ENCODE measurements at regions of chr18 and their contacts with region 1.

Region 1: DNA sequence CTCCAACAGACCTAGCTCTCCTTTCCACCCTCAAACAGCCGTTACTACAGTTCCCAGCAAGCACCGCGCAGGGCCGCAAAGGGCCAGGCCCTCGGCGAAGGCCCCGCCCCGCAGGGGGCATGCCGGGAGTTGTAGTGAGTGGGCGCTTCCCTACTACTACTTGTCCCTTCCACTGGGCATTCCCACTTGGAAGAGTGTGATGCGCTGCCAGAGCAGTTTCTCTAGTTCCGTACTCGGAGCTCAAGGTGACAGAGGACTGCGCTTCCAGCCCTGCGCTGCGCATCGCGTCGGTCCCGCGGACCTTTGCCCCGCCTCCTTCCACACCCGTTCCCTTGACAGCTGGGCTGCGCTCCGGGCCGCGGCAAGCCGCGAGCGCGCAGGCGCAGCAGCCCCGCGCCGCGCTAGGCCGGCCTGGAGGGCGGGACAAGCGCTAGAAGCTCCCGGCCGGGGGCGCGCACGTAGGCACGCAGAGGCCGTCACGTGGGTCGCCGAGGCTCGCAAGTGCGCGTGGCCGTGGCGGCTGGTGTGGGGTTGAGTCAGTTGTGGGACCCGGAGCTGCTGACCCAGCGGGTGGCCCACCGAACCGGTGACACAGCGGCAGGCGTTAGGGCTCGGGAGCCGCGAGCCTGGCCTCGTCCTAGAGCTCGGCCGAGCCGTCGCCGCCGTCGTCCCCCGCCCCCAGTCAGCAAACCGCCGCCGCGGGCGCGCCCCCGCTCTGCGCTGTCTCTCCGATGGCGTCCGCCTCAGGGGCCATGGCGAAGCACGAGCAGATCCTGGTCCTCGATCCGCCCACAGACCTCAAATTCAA is at the start of gene VAPA:
- DNase-seq: peak; percentile 92 to 99
- ATAC-seq: peak; percentile 83 to 94 (median 84)
- H3K4me3 ChIP-seq: peak within 1 kb of the TSS; percentile 88
- H3K4me3 Mint-ChIP-seq: peak within 1 kb of the TSS; percentile 90
- H3K27ac ChIP-seq: peak within 1 kb of the TSS; percentile 96
- H3K27ac Mint-ChIP-seq: peak within 1 kb of the TSS; percentile 91
- H3K4me1 ChIP-seq: peaks cover 8% of the 10 kb centered on the region
- H3K4me1 Mint-ChIP-seq: peaks cover 26 to 27% of the 10 kb centered on the region in 2 donors
- H3K27me3 ChIP-seq: no peaks in the 10 kb centered on the region
- H3K27me3 Mint-ChIP-seq: peaks cover 7 to 20% of the 10 kb centered on the region in 2 donors
- CTCF ChIP-seq: no peak
- total RNA-seq, gene VAPA: 175 to 186 (median 182) TPM

Region 2: DNA sequence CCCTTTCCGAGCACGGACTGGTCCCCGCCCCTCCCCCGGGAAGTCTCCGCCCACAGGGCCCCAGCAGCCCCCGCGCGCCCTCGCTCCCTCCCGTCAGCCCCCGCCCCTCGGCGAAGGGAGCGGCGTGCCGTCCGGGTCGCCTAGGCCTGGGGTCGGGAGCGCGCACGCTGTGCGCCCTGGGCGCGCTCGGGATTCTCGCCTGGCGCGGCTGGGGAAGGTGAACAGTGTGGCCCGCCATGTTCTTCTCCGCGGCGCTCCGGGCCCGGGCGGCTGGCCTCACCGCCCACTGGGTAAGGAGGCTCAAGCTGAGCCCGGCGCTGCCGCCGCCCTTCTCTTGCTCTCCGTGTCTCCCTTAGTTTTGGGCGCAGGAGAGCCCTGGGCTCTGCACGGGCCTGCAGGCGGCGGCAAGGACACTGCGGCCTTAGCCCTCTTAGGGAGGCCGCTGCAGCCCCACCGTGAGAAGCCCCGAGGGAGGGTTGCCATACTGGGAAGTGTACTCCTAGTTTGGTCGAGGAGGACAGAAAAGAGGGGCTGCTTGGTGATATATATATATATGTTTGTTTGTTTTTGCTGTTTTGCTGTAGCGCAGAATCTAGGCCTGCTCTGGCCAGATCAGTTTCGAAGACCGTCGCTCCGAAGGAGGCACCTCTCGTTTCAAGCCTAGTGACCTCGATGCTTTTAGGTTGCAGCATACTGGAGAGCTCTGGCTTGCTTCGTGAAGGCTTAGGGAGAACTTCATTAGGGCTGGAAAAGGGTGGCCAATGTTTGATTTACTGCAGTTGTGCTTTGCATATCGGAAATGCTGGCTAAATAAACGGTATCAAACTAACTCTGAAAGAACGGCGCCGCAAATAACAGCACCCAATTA is 811.0 kb before region 1 on chr18 and contains the start of gene NDUFV2:
- intact Hi-C with region 1: loop called (anchors 10 kb)
- DNase-seq: peak; percentile 97 to 98
- ATAC-seq: peak; percentile 91 to 99 (median 93)
- H3K4me3 ChIP-seq: peak within 1 kb of the TSS; percentile 74
- H3K4me3 Mint-ChIP-seq: peak within 1 kb of the TSS; percentile 96
- H3K27ac ChIP-seq: peak within 1 kb of the TSS; percentile 90
- H3K27ac Mint-ChIP-seq: peak within 1 kb of the TSS; percentile 85 to 98
- H3K4me1 ChIP-seq: peaks cover 12% of the 10 kb centered on the region
- H3K4me1 Mint-ChIP-seq: peaks cover 61% of the 10 kb centered on the region in 2 donors
- H3K27me3 ChIP-seq: no peaks in the 10 kb centered on the region
- H3K27me3 Mint-ChIP-seq: no peaks in the 10 kb centered on the region
- CTCF ChIP-seq: no peak
- total RNA-seq, gene NDUFV2: 137 to 188 (median 154) TPM

Region 3: DNA sequence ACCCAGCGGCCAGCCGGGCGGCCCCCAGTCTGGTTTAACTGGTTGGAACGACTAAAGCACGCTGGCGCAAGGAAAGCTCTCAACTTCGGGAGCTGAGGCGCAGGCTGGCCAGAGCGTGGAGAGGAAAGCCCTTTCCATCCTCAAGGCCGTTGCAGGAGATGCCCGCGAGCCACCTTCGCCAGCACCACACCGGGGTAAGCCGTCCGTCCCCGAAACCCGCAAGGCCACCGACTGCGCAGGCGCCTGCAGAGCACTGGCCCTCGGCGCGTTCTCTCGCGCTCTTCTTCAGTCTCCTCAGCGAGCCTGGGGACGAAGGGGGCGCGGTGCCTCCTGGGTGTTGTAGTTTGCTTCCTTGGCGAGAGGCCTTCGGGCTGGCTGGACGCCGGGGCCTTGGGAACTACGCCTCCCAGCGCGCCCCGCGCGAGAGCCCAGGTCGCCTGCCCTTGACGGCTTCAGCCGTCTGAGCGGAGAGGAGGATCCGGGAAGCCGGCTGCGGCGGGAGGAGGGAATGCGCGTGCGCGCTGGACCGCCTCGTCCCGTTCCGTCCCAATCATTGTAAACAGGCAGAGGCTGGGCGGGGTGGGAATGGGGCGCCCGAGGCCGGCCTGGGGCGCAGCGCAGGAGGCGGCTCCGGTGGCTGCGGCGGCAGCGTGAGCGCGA is 438.6 kb before region 1 on chr18 and contains the start of gene RALBP1:
- intact Hi-C with region 1: loop called (anchors 5 kb)
- DNase-seq: peak; percentile 96 to 98
- ATAC-seq: peak; percentile 96 to 100 (median 98)
- H3K4me3 ChIP-seq: peak within 1 kb of the TSS; percentile 79
- H3K4me3 Mint-ChIP-seq: peak within 1 kb of the TSS; percentile 99
- H3K27ac ChIP-seq: peak within 1 kb of the TSS; percentile 86
- H3K27ac Mint-ChIP-seq: peak within 1 kb of the TSS; percentile 88 to 98
- H3K4me1 ChIP-seq: peaks cover 23% of the 10 kb centered on the region
- H3K4me1 Mint-ChIP-seq: peaks cover 28 to 38% of the 10 kb centered on the region in 2 donors
- H3K27me3 ChIP-seq: peaks cover 4% of the 10 kb centered on the region
- H3K27me3 Mint-ChIP-seq: peaks cover 17 to 31% of the 10 kb centered on the region in 2 donors
- CTCF ChIP-seq: no peak
- total RNA-seq, gene RALBP1: 27.3 to 40.0 (median 33.4) TPM

Region 4: DNA sequence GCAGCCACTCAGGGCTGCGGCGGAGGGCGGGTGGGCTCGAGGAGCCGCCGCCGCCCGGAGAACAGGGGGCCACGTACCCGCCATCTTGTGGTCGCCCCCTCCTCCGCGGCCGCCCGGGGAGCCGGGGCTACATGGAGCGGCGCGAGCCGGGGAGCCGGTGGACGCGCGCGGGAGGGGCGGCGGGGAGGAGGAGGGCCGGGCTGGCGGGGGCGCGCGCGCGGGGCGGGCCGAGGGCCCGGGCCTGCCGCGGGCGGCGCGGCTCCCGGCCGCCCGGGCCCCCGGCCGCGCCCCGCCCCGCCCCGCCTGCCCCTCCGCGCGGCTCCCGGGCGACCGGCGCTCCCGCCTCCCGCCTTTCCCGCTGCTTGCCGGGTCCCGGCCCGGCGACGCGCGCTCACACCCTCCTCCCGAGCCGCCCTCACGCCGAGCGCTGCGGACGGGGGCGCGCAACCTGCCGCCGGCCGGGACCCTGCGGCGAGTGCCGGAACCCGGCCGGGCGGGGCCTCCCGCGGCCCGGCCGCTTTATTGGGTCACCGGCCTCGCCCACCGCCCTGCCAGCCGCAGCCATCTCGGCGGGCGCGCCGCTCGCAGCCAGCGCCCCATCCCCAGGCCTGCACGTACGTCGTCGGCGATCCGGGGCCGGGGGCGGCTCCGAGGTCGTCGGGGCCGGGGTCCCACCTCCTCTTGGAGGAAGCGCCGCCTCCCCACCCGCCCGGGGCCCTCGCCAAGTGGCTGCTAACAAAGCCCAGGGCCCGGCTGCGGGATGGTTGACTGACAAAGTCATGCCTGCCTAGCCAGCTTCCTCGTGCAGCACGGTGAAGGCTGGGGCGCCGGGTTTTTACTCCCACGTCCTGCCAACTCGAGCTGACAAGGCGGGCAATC is 299.1 kb before region 1 on chr18 and contains the start of gene PPP4R1:
- intact Hi-C with region 1: loop called (anchors 10 kb)
- DNase-seq: peak; percentile 63 to 77
- ATAC-seq: peak; percentile 81 to 88 (median 83)
- H3K4me3 ChIP-seq: peak within 1 kb of the TSS; percentile 56
- H3K4me3 Mint-ChIP-seq: peak within 1 kb of the TSS; percentile 96
- H3K27ac ChIP-seq: peak within 1 kb of the TSS; percentile 62
- H3K27ac Mint-ChIP-seq: peak within 1 kb of the TSS; percentile 90 to 91
- H3K4me1 ChIP-seq: peaks cover 10% of the 10 kb centered on the region
- H3K4me1 Mint-ChIP-seq: peaks cover 39 to 45% of the 10 kb centered on the region in 2 donors
- H3K27me3 ChIP-seq: no peaks in the 10 kb centered on the region
- H3K27me3 Mint-ChIP-seq: no peaks in the 10 kb centered on the region
- CTCF ChIP-seq: no peak
- total RNA-seq, gene PPP4R1: 60.5 to 108 (median 72.6) TPM

Region 5: DNA sequence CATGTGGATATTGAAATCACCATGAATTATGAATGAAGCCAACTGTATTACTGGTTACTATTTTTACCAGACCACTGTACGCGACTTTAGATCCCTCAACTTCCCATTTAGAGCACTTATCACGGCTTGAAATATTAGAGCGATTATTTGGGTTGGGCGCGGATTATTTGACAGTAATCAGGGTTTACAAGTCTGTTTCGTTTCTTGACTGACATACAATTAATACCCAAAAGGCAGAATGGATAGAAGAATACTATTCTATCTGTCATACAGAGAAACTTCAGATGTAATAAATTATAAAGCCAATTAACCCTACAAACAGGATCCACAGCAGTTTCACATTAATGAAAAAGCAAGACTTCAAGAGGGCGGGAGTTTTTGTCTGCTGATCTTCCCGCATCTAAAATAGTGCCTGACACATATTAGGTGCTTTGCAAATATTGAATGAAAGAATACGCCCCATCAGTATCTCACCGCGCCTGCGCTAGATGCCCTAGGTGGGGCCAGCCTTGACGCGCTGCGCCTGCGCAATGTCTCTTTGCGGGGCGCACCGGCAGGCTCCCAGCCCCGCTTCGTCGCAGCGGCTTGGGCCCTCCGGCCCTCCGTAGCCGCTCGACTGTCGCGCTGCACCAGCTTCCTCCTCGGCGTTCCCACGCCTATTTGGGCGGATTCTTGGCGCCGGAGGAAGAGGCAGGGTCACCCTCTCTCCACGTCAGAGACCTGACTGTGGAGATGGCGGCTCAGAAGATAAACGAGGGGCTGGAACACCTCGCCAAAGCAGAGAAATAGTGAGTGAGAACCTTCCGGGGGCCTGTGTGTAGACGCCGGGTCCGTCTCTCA is 611.9 kb after region 1 on chr18 and contains the start of gene NAPG:
- intact Hi-C with region 1: loop called (anchors 5 kb)
- DNase-seq: peak; percentile 83 to 98
- ATAC-seq: peak; percentile 89 to 94 (median 92)
- H3K4me3 ChIP-seq: peak within 1 kb of the TSS; percentile 84
- H3K4me3 Mint-ChIP-seq: peak within 1 kb of the TSS; percentile 96
- H3K27ac ChIP-seq: peak within 1 kb of the TSS; percentile 86
- H3K27ac Mint-ChIP-seq: peak within 1 kb of the TSS; percentile 91 to 92
- H3K4me1 ChIP-seq: peaks cover 21% of the 10 kb centered on the region
- H3K4me1 Mint-ChIP-seq: peaks cover 44 to 49% of the 10 kb centered on the region in 2 donors
- H3K27me3 ChIP-seq: no peaks in the 10 kb centered on the region
- H3K27me3 Mint-ChIP-seq: peaks cover 15 to 16% of the 10 kb centered on the region in 2 donors
- CTCF ChIP-seq: no peak
- total RNA-seq, gene NAPG: 34.3 to 62.5 (median 48.7) TPM

Region 6: DNA sequence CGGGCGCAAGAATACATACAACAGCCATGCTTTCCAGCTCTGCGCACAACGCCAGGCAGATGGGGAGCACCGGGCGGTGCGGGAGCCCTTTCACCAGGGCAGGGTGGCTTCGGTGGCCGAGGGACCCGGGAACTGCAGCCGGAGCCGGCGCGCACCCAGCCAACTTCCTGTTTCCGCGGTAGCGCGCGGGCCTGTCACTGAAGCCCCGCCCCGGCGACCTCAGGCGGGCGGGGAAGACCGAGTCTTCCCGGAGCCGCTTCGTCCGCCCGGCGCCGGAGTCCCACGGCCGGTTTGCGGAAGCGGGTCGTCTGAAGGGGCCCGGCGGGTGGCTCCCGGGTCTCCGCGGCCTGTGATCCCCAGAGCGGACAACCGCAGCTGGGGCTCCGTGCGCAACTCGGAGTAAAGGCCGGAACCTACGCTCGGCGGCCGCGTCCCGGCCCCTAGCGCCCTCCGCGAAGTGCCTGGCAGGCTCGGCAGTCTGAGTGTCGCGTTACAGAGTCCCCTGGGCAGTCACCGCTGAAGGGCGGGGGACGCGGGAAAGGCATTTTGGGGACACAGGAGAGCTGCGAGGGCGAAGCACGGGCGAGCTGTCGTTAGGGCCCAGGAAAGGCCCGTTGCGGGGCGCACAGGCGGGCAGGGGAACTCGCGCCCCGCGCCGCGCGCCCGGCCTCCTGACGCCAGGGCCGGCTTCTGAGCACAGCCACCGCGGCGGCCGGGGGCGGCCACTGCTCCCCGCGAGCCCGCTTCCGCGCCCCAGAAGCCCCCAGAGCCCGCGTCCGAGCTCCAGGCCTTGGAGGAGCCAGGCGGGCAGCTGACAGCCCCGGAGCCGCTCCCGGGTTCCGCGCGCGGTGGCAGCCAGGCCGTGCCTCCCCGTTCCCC is 1994.7 kb after region 1 on chr18 and contains the start of gene MPPE1:
- intact Hi-C with region 1: loop called (anchors 5 kb)
- DNase-seq: peak; percentile 87 to 93
- ATAC-seq: peak; percentile 90 to 95 (median 91)
- H3K4me3 ChIP-seq: peak within 1 kb of the TSS; percentile 99
- H3K4me3 Mint-ChIP-seq: peak within 1 kb of the TSS; percentile 94
- H3K27ac ChIP-seq: peak within 1 kb of the TSS; percentile 100
- H3K27ac Mint-ChIP-seq: peak within 1 kb of the TSS; percentile 91 to 96
- H3K4me1 ChIP-seq: peaks cover 14% of the 10 kb centered on the region
- H3K4me1 Mint-ChIP-seq: peaks cover 14 to 35% of the 10 kb centered on the region in 2 donors
- H3K27me3 ChIP-seq: no peaks in the 10 kb centered on the region
- H3K27me3 Mint-ChIP-seq: no peaks in the 10 kb centered on the region
- CTCF ChIP-seq: no peak
- total RNA-seq, gene MPPE1: 98.3 to 110 (median 105) TPM